Heart left ventricle (tissue), 16 donors: ENCODE measurements at regions of chr4 and their contacts with region 1.

Region 1: GRCh38 chr4:107824353-107825071 is at the start of gene SGMS2:
- DNase-seq: peak; percentile 84 to 93 (median 89)
- ATAC-seq: peak; percentile 82 to 98 (median 92)
- H3K4me3 ChIP-seq: peak within 1 kb of the TSS; percentile 64 to 93 (median 85)
- H3K27ac ChIP-seq: peak within 1 kb of the TSS; percentile 71 to 96 (median 93)
- H3K4me1 ChIP-seq: peaks cover 0 to 38% (median 13%) of the 10 kb centered on the region in 12 donors
- H3K27me3 ChIP-seq: no peaks in the 10 kb centered on the region
- CTCF ChIP-seq: peak in 1 of 12 donors; percentile 36
- POLR2A ChIP-seq: peak; percentile 3 to 56
- total RNA-seq, gene SGMS2: 19.2 to 117 (median 29.8) TPM

Region 2: DNA sequence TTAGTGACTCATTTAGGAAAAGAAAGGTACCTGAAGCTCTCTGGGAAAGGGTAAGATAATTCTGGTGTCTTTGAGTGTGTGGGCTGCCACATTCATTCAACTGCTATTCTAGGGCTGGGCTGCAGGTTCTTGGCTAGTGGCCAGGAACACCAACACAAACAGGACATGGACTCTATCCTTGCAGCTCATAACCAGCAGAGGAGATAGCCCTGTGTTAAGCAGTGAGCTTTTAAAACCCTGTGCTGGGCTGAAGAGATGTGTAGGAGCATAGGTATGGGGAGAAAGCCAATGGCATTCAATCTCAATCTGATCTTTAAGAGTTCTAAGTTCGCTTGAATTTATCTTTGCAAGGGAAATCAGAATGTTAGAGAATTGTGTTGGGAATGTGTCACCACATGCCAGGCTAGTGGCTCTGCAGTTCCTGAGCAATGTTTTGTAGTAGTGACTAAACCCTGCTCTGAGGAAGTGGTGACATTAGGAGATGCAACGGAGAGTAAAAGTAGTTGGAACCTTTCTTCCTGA is 39.4 kb after region 1 on chr4:
- intact Hi-C with region 1: loop called in 4 of 10 experiments (anchors 2 to 5 kb)
- DNase-seq: peak; percentile 38 to 76 (median 66)
- ATAC-seq: peak; percentile 94 to 96 (median 94)
- H3K4me3 ChIP-seq: no peak overlapping the region
- H3K27ac ChIP-seq: peak overlapping the region in 11 of 12 donors; percentile 3 to 76 (median 32)
- H3K4me1 ChIP-seq: peaks cover 0 to 31% (median 14%) of the 10 kb centered on the region in 12 donors
- H3K27me3 ChIP-seq: no peaks in the 10 kb centered on the region
- CTCF ChIP-seq: peak in 1 of 12 donors; percentile 7
- POLR2A ChIP-seq: no peak

Region 3: DNA sequence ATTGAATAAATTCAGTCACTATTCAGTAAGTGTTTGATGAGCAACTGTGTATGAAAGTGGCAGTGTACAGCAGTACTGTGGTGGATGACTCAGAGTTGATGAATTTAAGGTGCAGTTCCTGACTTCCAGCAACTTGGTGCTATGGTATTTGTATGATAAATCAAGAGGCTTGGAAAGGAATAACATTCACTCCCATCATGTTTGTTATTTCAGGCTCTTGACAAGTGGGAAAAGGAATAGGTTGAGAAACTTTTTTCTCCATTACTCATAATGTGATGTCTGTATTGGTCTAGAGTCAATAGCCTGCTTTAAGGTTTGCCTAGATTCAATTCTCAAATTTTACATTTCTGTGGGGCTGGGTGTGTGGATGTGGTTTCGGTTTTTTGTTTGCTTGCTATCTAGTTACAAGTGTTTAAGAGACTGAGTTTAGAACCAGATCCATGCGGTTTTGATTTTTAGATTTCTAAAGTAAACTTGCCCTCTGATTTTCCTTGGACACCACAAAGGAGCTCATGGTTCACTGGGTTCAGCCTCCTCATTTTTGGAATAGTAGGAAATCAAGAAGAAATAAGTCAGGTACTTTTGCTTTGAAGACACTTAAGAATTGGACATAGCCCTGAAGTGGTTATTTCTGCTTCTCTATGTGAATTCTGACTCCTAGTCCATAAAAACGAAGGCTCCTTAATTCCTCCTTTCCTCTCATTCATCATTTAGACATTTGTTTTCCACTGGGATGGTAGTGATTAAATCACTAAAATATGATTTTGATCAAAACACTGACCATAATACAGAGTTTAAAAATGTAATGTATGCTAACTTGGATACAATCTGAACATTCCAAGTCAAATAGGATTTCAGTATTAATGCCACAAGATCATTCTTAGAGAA is 71.9 kb after region 1 on chr4:
- intact Hi-C with region 1: loop called in 5 of 10 experiments (anchors 5 to 10 kb)
- DNase-seq: no peak
- ATAC-seq: peak in 3 of 4 donors; percentile 62 to 81 (median 71)
- H3K4me3 ChIP-seq: no peak overlapping the region
- H3K27ac ChIP-seq: peak overlapping the region in 2 of 12 donors; percentile 21 to 60
- H3K4me1 ChIP-seq: peaks cover 0 to 24% (median 8%) of the 10 kb centered on the region in 12 donors
- H3K27me3 ChIP-seq: no peaks in the 10 kb centered on the region
- CTCF ChIP-seq: no peak
- POLR2A ChIP-seq: no peak

Region 4: GRCh38 chr4:107913281-107913899 is 88.9 kb after region 1 on chr4:
- intact Hi-C with region 1: loop called in 7 of 10 experiments (anchors 5 to 10 kb)
- DNase-seq: peak in 1 of 5 donors; percentile 44
- ATAC-seq: peak in 3 of 4 donors; percentile 73 to 86 (median 77)
- H3K4me3 ChIP-seq: no peak overlapping the region
- H3K27ac ChIP-seq: no peak overlapping the region
- H3K4me1 ChIP-seq: peaks cover 0 to 3% (median 0%) of the 10 kb centered on the region in 12 donors
- H3K27me3 ChIP-seq: no peaks in the 10 kb centered on the region
- CTCF ChIP-seq: peak; percentile 62 to 94 (median 80)
- POLR2A ChIP-seq: no peak

Region 5: DNA sequence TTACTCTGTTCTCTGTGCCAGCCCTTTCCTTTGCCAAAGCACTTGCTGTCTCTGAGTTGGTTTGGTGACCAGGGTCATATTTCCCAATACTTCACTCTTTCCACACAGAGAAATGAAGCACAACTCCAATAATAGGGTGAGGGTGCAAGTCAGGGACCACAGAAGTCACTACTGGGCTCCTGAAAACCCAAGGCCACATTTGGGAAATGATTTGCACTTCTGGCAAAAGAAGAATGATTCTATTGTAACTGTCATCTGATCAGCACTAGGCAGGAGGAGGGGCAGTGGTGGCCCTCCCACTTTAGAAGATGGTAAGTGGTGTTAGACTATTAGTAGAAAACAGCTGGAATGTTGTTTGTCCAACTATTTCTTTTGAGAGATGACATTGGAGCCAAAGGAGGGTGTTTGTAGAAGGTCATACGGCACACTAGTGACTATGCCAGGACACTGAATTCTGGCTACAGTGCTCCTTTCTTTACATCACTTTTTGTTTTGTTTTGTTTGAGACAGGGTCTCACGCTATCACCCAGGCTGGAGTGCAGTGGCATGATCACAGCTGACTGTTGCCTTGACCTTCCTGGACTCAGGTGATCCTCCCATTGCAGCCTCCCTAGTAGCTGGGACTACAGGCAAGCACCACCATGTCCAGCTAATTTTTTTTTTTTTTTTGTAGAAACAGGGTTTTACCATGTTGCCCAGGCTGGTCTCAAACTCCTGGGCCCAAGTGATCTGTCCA is 154.4 kb after region 1 on chr4:
- intact Hi-C with region 1: no loop called
- DNase-seq: no peak
- ATAC-seq: peak in 2 of 4 donors; percentile 24 to 28
- H3K4me3 ChIP-seq: no peak overlapping the region
- H3K27ac ChIP-seq: no peak overlapping the region
- H3K4me1 ChIP-seq: peaks cover 0 to 8% (median 0%) of the 10 kb centered on the region in 12 donors
- H3K27me3 ChIP-seq: no peaks in the 10 kb centered on the region
- CTCF ChIP-seq: no peak
- POLR2A ChIP-seq: no peak